Calu3 (cell line): ENCODE measurements at regions of chr2 and their contacts with region 1.

Region 1: DNA sequence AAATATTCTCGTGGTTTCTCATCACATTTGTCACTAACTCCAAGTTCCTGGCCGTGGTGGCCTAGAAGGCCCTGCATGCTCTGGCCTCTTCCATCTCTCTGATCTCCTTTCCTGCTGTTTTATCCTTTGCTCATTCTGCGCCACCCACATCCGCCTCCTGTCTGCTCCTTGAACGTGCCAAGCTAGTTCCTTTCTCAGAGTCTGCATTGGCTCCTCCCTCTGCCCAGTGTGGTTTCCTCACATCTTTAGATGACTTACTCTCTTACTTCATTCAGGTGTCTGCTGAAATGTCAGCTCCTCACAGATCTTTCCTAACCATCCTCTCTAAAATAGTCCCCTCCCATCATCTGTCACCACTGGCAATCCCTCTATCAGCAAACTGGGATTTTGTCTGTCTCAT is 158.6 kb upstream of the RBMS1 start:
- DNase-seq: no peak
- H3K4me3 Mint-ChIP-seq: no peak overlapping the region
- H3K27ac Mint-ChIP-seq: no peak overlapping the region
- H3K4me1 Mint-ChIP-seq: peaks cover 56% of the 10 kb centered on the region
- H3K27me3 Mint-ChIP-seq: no peaks in the 10 kb centered on the region
- CTCF ChIP-seq: no peak

Region 2: GRCh38 chr2:160406591-160407392 is 245.4 kb before region 1 on chr2:
- CTCF ChIA-PET with region 1: no interaction called
- intact Hi-C with region 1: loop called (anchors 5 kb)
- DNase-seq: peak; percentile 48
- H3K4me3 Mint-ChIP-seq: peak overlapping the region; percentile 63
- H3K27ac Mint-ChIP-seq: peak overlapping the region; percentile 85
- H3K4me1 Mint-ChIP-seq: peaks cover 67% of the 10 kb centered on the region
- H3K27me3 Mint-ChIP-seq: no peaks in the 10 kb centered on the region
- CTCF ChIP-seq: no peak

Region 3: DNA sequence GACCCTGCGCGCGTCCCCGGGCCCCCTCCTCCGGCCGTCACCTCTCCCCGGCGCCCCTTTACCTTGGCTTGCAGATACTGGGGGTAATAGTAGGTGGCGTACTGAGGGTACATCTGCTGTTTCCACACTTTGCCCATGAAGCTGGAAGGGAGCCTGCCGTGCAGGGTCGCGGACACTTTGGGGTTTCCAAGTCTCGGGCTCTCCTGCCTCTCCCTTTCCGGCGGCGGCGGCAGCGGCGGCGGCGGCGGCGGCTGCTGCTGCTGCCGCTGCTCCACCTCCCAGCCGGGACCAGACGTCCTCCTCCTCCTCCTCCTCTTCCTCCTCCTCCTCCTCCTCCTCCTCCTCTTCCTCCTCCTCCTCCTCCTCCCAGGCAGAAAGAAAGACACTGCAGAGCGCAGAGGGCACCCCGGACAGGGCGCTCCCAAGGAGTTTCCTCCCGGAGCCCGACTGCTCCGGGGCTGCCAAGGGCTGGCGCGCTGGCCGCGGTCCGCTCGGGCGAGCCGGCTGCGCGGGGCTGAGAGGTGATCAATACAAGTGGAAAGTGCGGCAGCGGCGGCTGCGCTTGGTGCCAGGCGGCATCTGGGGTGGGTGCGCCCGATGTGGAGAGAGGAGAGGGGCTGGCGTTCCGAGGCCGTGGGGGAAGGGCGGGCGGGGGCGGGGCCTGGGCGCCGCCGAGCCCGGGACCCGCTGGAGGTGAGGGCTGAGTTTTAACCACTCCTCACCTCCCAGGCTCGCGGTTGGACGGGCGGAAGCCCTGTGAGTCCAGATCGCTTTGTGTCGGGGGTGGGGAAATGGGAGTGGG is 158.8 kb before region 1 on chr2 and contains the start of gene RBMS1:
- CTCF ChIA-PET with region 1: interaction called, 3 read pairs
- intact Hi-C with region 1: loop called (anchors 10 kb)
- DNase-seq: peak; percentile 58
- H3K4me3 Mint-ChIP-seq: peak within 1 kb of the TSS; percentile 98
- H3K27ac Mint-ChIP-seq: peak within 1 kb of the TSS; percentile 82
- H3K4me1 Mint-ChIP-seq: peaks cover 8% of the 10 kb centered on the region
- H3K27me3 Mint-ChIP-seq: no peaks in the 10 kb centered on the region
- CTCF ChIP-seq: no peak
- total RNA-seq, gene RBMS1: 57.9 and 61.9 TPM in 2 replicates

Region 4: GRCh38 chr2:160666154-160667060 is 14.2 kb after region 1 on chr2:
- CTCF ChIA-PET with region 1: interaction called, 15 read pairs
- intact Hi-C with region 1: no loop called
- DNase-seq: peak; percentile 44
- H3K4me3 Mint-ChIP-seq: peak overlapping the region; percentile 51
- H3K27ac Mint-ChIP-seq: peak overlapping the region; percentile 40
- H3K4me1 Mint-ChIP-seq: peaks cover 38% of the 10 kb centered on the region
- H3K27me3 Mint-ChIP-seq: no peaks in the 10 kb centered on the region
- CTCF ChIP-seq: no peak

Region 5: GRCh38 chr2:160752496-160753330 is 100.5 kb after region 1 on chr2:
- CTCF ChIA-PET with region 1: interaction called, 3 read pairs
- intact Hi-C with region 1: loop called (anchors 5 kb)
- DNase-seq: peak; percentile 70
- H3K4me3 Mint-ChIP-seq: peak overlapping the region; percentile 22
- H3K27ac Mint-ChIP-seq: peak overlapping the region; percentile 82
- H3K4me1 Mint-ChIP-seq: peaks cover 50% of the 10 kb centered on the region
- H3K27me3 Mint-ChIP-seq: no peaks in the 10 kb centered on the region
- CTCF ChIP-seq: no peak